Gastrocnemius medialis (tissue), 4 donors: ENCODE measurements at regions of chr17 and their contacts with region 1.

Region 1: GRCh38 chr17:81854974-81855774 is 5.2 kb downstream of the P4HB start:
- DNase-seq: peak in 1 of 2 donors; percentile 75
- ATAC-seq: peak; percentile 41 to 74
- H3K4me3 ChIP-seq: no peak overlapping the region
- H3K27ac ChIP-seq: peak overlapping the region; percentile 23 to 86 (median 46)
- H3K4me1 ChIP-seq: peaks cover 23 to 37% of the 10 kb centered on the region in 2 donors
- H3K27me3 ChIP-seq: no peaks in the 10 kb centered on the region
- CTCF ChIP-seq: peak in 3 of 5 experiments; percentile 13 to 51 (median 25)
- POLR2A ChIP-seq: no peak

Region 2: DNA sequence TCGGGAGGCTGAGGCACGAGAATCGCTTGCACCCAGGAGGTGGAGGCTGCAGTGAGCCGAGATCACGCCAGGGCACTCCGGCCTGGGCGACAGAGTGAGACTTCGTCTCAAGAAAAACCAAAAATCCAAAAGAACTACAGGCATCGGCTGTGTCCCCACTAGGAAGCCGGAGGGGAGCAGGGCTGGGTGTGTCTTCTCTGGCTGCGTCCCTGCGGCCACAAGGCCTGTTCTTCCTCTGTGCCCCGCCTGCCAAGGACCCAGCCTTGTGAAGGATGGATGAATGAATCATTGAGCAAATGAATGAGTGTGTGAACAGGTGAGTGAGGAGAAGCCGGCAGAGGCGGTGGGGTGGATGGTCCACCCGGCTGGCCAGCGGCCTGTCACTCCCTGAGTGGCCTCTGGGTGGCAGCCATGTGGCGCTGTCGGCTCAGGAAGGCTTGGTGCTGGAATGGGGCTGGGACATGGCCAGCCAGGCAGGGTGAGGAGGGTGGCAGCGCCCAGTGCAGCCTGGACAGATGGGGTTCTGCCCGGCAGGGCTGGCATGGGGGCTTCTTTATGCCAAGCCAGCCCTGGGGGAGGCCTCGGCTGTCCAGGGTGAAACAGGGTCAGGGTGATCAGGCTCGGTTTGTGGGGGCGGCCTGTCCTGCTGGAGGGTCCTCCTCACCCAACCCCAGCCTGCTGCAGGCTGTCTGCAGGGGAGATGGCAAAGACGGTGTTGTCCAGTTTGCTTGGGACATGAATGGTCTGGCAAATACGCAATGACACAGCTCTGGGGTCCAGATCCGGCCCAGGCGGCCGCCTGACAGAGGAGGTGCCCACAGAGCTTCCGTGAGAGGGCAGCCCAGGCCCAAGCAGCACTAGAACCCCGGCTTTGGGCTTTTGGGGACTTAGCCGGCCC is 121.4 kb before region 1 on chr17:
- in situ Hi-C with region 1: no loop called
- intact Hi-C with region 1: loop called (anchors 1 kb)
- DNase-seq: peak; percentile 70 to 80
- ATAC-seq: peak; percentile 86 to 93
- H3K4me3 ChIP-seq: no peak overlapping the region
- H3K27ac ChIP-seq: no peak overlapping the region
- H3K4me1 ChIP-seq: peaks cover 4 to 5% of the 10 kb centered on the region in 2 donors
- H3K27me3 ChIP-seq: peaks cover 8 to 29% (median 9%) of the 10 kb centered on the region in 3 donors
- CTCF ChIP-seq: peak; percentile 90 to 98 (median 93)
- POLR2A ChIP-seq: no peak

Region 3: DNA sequence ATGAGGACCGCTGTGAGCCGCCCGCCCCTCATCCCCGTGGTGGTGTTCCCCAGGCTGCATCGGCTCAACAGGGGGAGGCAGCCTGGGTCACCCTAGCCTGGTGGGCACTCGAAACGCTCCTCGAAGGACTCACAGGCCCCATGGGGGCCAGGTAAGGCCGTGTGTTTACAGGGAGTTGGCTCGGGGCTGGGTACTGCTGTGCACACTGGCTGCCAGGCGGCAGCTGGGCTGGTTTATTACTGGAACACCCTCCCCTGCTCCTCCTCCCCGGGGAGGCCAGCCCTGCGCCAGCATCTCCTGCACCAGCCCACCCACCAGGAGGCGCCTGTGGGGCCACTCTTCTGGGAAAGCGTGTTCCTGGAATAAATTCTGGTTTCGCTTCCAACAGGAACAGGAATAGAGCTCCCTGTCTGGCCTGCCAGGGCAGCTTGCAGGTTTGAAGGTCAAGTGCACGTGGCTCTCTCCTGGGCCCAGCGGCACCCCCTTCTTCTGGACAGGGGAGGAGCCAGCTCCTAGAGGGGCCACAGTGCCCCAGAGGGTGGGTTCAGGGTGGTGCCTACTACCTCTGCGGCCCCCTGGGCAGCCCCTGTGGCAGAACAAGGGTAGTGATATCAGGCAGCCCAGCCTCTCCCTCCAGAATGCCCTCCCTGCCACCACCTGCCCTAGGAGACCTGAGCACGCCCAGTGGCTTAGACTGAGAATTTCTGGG is 33.4 kb before region 1 on chr17:
- in situ Hi-C with region 1: loop called in 1 of 4 experiments (anchors 5 kb)
- intact Hi-C with region 1: loop called (anchors 1 kb)
- DNase-seq: peak; percentile 77 to 94
- ATAC-seq: peak; percentile 87 to 92
- H3K4me3 ChIP-seq: peak overlapping the region in 1 of 4 donors; percentile 4
- H3K27ac ChIP-seq: peak overlapping the region; percentile 86 to 94 (median 90)
- H3K4me1 ChIP-seq: peaks cover 17 to 21% of the 10 kb centered on the region in 2 donors
- H3K27me3 ChIP-seq: no peaks in the 10 kb centered on the region
- CTCF ChIP-seq: peak; percentile 78 to 88 (median 82)
- POLR2A ChIP-seq: peak in 1 of 2 donors; percentile 19